Activated naive CD4-positive, alpha-beta T cell treated with anti-CD3 and anti-CD28 coated beads, Interleukin-2, amount 10 ng/mL, durations not matched to agents 7 days and 5 days (primary cell): ENCODE measurements at regions of chr13 and their contacts with region 1.

Region 1: DNA sequence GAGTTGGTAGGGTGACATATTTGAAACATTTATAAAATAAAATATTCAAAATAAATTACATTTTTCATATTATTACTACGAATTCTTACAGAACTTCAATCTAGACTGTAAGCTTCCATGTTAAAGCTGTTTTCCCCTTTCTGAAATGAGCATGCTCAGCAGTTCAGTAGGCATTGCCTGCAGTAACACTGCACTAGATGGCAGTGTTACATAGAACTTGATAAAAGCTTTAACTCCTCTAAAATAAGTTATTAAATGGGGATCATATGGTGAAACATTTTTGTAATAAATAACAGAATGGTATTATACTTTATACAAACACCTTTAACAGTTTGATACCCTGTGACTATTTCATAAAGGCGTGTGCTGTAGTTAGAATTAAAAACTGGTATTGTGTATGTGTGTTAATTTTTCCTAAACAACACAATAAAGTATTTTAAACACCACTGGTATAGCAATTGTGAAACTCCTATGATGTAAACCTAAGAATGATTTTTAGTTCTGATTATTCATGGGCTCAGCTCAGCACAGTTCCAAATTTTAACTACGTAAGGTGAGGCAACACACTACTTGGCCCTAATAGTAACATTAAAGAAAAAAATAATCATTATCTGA is 11.6 kb upstream of the GPR18 start:
- DNase-seq: peak; percentile 38
- H3K4me3 Mint-ChIP-seq: no peak overlapping the region
- H3K27ac Mint-ChIP-seq: no peak overlapping the region
- H3K4me1 Mint-ChIP-seq: peaks cover 56% of the 10 kb centered on the region
- H3K27me3 Mint-ChIP-seq: no peaks in the 10 kb centered on the region

Region 2: DNA sequence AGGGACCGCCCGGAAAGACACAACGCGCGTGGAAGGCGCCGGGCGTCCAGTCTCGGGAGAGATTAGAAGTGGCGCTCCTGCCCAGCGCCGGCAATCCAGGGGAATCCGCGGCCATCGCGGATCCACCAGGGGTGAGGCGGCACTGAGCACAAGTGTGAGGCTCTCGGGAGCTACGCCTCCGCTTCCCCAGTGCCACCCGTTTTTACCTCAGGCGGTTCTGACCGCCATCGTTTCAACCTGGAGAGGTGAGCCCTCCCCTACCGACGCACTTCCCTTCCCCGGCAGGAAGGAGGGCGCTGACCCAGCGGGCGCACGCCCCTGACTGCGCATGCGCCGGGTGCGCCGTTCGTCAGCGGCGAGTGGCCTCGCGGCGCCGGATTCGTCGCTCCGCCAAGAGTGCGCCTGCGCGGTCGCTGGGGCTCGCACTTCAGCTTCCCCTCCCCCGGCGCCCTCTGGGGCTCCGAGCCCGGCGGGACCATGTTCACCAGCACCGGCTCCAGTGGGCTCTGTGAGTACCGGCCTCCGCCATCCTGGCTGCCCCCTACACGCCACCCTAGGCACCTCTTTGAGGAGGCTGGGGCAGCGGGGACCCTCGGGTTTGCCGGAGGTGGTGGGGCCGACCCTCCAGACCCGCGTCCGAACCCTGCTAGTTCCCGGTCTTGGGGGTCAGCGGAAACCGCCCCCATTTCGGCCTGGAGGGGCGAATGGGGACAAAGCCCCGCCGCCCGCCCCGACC is 69.1 kb before region 1 on chr13 and contains the start of gene UBAC2:
- CTCF ChIA-PET with region 1: interaction called, 35 read pairs
- DNase-seq: peak; percentile 96
- H3K4me3 Mint-ChIP-seq: peak within 1 kb of the TSS; percentile 81
- H3K27ac Mint-ChIP-seq: peak within 1 kb of the TSS; percentile 87
- H3K4me1 Mint-ChIP-seq: peaks cover 58% of the 10 kb centered on the region
- H3K27me3 Mint-ChIP-seq: peaks cover 3% of the 10 kb centered on the region

Region 3: DNA sequence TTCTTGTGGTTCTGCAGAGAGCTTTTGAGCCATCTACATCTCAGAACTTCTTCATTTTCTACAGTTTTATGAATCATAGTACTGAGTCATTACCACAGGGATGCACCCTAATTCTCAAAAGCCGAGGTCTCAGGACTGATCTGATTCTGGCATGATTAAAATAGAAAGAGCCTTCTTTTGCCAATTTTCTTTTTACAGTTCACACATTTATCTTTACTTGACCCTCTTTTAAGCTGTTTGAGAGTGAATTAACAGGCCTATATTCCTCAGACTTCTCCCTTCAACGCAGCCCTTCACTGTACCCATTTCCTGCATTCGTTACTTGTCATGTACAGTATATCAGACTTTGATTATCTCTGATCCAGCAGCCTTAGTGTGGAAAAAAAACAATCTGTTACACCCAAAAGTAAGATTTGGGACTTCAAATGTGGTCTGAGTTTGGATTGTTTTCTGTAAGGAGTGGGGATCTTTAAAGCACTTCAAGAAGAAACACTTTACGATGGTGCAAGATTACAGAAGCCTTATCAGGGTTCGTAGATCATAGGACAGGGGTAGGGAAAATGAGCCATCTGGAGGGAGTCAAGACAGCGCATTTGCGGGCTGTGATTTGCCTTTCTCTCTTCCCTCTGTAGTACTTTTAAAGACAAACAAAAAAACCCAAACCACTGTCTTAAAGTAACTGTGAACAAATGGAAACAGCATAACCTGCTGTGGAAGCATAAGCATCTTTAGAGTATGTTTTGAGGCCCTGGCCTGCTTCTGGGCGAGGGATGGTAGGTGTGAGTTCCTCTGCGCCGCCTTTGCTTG is 52.8 kb after region 1 on chr13:
- CTCF ChIA-PET with region 1: interaction called, 12 read pairs
- DNase-seq: peak; percentile 48
- H3K4me3 Mint-ChIP-seq: peak overlapping the region; percentile 16
- H3K27ac Mint-ChIP-seq: peak overlapping the region; percentile 91
- H3K4me1 Mint-ChIP-seq: peaks cover 64% of the 10 kb centered on the region
- H3K27me3 Mint-ChIP-seq: no peaks in the 10 kb centered on the region

Region 4: GRCh38 chr13:99356158-99357091 is 86.7 kb after region 1 on chr13:
- CTCF ChIA-PET with region 1: interaction called, 20 read pairs
- DNase-seq: peak; percentile 79
- H3K4me3 Mint-ChIP-seq: peak overlapping the region; percentile 53
- H3K27ac Mint-ChIP-seq: peak overlapping the region; percentile 95
- H3K4me1 Mint-ChIP-seq: peaks cover 99% of the 10 kb centered on the region
- H3K27me3 Mint-ChIP-seq: no peaks in the 10 kb centered on the region

Region 5: DNA sequence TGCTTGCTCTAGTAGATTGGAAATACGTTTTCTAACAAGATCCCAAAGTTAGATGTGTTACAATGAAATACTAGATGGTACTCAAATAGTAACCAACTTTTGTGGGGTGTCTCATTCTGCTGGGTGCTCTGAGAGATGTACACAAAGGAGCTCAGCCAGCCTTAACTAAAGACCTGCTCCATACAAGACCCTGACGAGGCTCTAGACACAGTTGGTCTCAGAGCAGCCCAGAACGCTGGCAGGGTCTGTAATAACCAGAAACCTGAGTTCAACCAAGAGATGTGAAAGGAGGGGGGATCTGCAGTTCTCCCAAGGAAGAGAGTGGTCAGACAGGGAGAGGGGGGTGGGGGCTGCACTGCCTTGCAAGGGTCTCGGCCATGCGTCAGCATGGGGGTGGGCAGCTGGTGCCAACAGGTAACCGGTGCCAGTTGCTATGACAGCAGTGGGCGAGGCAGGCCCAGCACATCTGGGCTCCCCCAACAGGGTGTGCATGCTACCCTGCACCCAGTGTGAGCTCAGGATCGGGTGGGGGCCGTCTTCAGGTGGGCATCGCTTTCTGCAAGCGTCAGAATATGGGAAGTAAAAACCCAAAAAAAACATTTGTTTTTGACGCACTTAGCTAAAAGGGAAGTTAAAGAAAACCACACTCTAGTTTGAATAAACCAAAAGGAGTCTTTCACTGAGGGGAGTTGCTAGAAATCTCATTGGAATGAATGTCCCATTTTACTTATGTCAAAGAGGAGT is 105.4 kb after region 1 on chr13:
- CTCF ChIA-PET with region 1: interaction called, 22 read pairs
- DNase-seq: peak; percentile 41
- H3K4me3 Mint-ChIP-seq: peak overlapping the region; percentile 29
- H3K27ac Mint-ChIP-seq: peak overlapping the region; percentile 86
- H3K4me1 Mint-ChIP-seq: peaks cover 91% of the 10 kb centered on the region
- H3K27me3 Mint-ChIP-seq: no peaks in the 10 kb centered on the region

Region 6: GRCh38 chr13:99436686-99437416 is 167.1 kb after region 1 on chr13:
- CTCF ChIA-PET with region 1: interaction called, 256 read pairs
- DNase-seq: peak; percentile 95
- H3K4me3 Mint-ChIP-seq: peak overlapping the region; percentile 25
- H3K27ac Mint-ChIP-seq: peak overlapping the region; percentile 4
- H3K4me1 Mint-ChIP-seq: peaks cover 72% of the 10 kb centered on the region
- H3K27me3 Mint-ChIP-seq: peaks cover 23% of the 10 kb centered on the region

Region 7: DNA sequence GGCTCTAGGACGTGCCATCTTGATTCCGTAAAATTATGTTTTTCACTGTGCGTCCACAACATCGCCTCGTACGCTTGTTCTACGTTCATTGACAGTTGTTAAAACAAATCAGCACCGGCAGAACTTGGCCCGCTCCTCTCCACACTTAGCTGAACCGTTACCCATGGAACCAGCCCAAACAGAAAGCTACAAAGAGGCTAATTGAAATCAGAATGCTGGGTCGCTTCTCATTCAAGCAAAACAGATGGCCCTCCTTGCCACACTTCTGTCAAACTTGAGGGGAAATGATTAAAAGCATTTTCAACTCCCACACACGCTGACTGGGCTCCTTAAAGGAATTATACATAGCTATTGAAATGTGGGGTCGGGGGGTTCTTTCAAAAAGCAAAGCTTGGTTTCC is 303.2 kb after region 1 on chr13:
- CTCF ChIA-PET with region 1: no interaction called
- DNase-seq: no peak
- H3K4me3 Mint-ChIP-seq: no peak overlapping the region
- H3K27ac Mint-ChIP-seq: no peak overlapping the region
- H3K4me1 Mint-ChIP-seq: peaks cover 5% of the 10 kb centered on the region
- H3K27me3 Mint-ChIP-seq: peaks cover 3% of the 10 kb centered on the region

Region 8: DNA sequence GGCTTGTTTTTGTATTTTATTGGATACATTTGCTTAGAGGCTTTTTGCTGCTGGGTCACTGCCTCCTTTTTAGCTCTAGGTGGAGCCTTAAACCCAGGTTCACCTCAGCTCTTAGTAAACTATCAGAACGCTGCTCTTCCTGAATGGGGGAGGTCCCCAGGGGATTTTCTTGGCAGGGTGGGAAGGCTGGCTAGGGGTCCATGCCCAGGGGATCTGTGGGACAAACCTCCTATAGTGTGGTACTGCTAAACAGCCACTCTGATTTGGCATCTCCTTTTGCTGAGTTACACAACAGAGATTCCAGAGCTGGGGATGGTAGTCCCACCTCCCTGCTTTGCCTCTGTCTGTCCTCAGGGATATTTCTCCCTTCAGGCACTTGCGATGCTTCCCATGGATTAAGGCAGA is 496.9 kb after region 1 on chr13:
- CTCF ChIA-PET with region 1: no interaction called
- DNase-seq: no peak
- H3K4me3 Mint-ChIP-seq: no peak overlapping the region
- H3K27ac Mint-ChIP-seq: no peak overlapping the region
- H3K4me1 Mint-ChIP-seq: no peaks in the 10 kb centered on the region
- H3K27me3 Mint-ChIP-seq: no peaks in the 10 kb centered on the region